ENCODE measurements at regions of chr21 and their contacts with region 1.

Region 1: DNA sequence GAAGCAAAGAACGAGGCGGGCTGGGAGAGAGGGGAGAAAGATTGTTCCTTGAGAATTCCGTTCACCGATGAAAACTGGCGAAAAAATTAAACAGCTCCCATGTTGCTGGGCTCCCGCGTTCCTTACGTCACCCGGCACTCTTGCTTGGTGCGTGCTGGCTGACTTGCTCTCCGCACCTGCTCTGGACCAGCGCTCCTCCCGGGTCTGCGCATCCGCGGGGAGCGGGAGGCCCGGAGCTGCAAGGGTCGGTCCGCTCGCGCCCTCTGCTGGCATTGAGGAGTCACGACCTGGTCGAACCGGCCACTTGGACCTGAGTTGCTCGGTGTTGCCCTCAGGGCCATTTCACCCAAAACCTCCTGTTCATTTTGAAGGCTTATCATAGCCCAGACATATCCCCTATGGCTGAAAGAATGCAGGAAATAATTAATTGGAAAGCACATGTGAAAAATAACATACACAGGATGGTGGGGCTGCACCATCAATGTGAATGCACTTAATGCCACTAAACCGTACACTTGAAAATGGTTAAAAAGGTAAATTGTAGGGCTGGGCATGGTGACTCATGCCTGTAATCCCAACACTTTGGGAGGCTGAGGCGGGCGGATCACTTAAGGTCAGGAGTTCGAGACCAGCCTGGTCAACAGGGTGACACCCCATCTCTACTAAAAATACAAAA is 98.9 kb upstream of the BACE2 start:
- DNase-seq: peak; percentile 60 to 95 (median 80)
- ATAC-seq: peak; percentile 85 to 98 (median 96)
- H3K4me3 ChIP-seq: no peak overlapping the region
- H3K27ac ChIP-seq: no peak overlapping the region
- H3K4me1 ChIP-seq: no peaks in the 10 kb centered on the region
- H3K27me3 ChIP-seq: peaks cover 0 to 13% (median 0%) of the 10 kb centered on the region in 4 donors
- CTCF ChIP-seq: peak; percentile 70 to 85 (median 79)

Region 2: GRCh38 chr21:40143822-40144525 is 925.1 kb before region 1 on chr21:
- intact Hi-C with region 1: loop called in 2 of 3 experiments (anchors 10 kb)
- DNase-seq: peak in 5 of 6 donors; percentile 12 to 85 (median 57)
- ATAC-seq: peak in 3 of 4 donors; percentile 72 to 77 (median 77)
- H3K4me3 ChIP-seq: no peak overlapping the region
- H3K27ac ChIP-seq: no peak overlapping the region
- H3K4me1 ChIP-seq: no peaks in the 10 kb centered on the region
- H3K27me3 ChIP-seq: peaks cover 0 to 3% (median 0%) of the 10 kb centered on the region in 4 donors
- CTCF ChIP-seq: peak; percentile 55 to 92 (median 78)

Region 3: GRCh38 chr21:40466893-40467501 is 602.1 kb before region 1 on chr21:
- intact Hi-C with region 1: loop called in 2 of 3 experiments (anchors 10 kb)
- DNase-seq: peak in 1 of 6 donors; percentile 15
- ATAC-seq: peak in 1 of 4 donors; percentile 42
- H3K4me3 ChIP-seq: no peak overlapping the region
- H3K27ac ChIP-seq: no peak overlapping the region
- H3K4me1 ChIP-seq: no peaks in the 10 kb centered on the region
- H3K27me3 ChIP-seq: peaks cover 0 to 25% (median 2%) of the 10 kb centered on the region in 4 donors
- CTCF ChIP-seq: peak in 2 of 4 donors; percentile 26 to 42

Region 4: DNA sequence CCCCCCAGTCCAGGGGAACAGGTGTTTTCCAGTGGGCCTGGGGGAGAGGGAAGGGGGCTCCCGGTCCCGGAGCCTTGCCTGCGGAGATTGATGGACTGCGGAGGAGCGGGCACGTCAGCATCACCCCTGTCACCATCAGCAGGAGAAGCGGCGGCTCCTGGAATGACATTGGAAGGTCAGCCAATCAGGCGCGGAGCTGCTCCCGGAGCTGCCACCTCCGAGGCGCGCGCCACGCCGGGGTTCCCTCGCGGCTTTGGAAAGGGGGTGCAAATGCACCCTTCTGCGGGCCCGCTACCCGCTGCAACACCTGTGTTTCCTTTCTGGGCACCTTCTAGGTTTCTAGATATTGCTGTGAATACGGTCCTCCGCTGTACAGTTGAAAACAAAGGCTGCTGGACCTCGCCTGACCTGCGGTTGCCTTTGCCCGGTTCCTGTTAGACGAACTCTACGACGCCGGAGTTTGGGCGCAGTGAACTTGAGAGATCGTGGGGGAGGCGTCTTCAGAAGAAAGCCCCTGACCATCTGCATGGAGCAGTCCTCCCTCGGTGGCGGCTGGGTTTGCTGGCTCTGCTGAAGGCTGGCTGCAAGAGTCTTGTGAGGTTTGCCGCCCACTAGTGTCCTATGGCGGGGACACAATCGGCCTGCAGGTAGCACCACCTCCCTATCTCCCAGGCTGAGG is 227.4 kb before region 1 on chr21:
- intact Hi-C with region 1: loop called in 1 of 3 experiments (anchors 10 kb)
- DNase-seq: peak; percentile 36 to 85 (median 60)
- ATAC-seq: peak; percentile 82 to 98 (median 93)
- H3K4me3 ChIP-seq: peak overlapping the region in 1 of 4 donors; percentile 35
- H3K27ac ChIP-seq: no peak overlapping the region
- H3K4me1 ChIP-seq: no peaks in the 10 kb centered on the region
- H3K27me3 ChIP-seq: peaks cover 0 to 51% (median 10%) of the 10 kb centered on the region in 4 donors
- CTCF ChIP-seq: peak in 3 of 4 donors; percentile 42 to 46 (median 46)

Region 5: GRCh38 chr21:41786485-41786987 is 717.4 kb after region 1 on chr21:
- intact Hi-C with region 1: no loop called
- DNase-seq: peak in 1 of 6 donors; percentile 65
- ATAC-seq: peak; percentile 51 to 77 (median 66)
- H3K4me3 ChIP-seq: no peak overlapping the region
- H3K27ac ChIP-seq: peak overlapping the region in 1 of 4 donors; percentile 11
- H3K4me1 ChIP-seq: no peaks in the 10 kb centered on the region
- H3K27me3 ChIP-seq: no peaks in the 10 kb centered on the region
- CTCF ChIP-seq: no peak